ENCODE measurements at regions of chrX and their contacts with region 1.

Region 1: DNA sequence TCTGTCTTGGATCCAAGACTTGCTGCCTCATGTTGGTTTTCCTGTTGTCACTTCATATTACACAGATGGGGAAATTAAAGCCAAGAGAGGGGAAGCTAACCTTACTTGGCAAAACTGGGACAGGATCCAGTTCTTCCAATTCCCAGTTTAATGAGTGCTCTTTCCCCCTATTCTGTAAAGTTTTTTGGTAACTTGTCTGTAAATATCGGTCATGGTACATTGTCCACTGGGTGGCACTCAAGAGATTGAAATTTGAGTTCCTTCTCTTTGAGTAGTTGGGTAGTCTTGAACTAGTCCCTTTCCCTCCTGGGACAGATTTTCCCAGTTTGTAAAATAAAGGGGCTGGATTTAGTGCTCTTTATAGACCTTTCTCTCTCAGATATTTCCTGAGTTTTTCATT is 12.4 kb upstream of the EOLA2 start:
- DNase-seq: peak in 1 of 2 donors; percentile 21
- ATAC-seq: peak in 4 of 8 donors; percentile 29 to 59 (median 39)
- H3K4me3 ChIP-seq: no peak overlapping the region
- H3K27ac ChIP-seq: no peak overlapping the region
- H3K4me1 ChIP-seq: peaks cover 0 to 3% (median 0%) of the 10 kb centered on the region in 9 donors
- H3K27me3 ChIP-seq: no peaks in the 10 kb centered on the region
- CTCF ChIP-seq: peak in 7 of 9 donors; percentile 28 to 57 (median 47)

Region 2: DNA sequence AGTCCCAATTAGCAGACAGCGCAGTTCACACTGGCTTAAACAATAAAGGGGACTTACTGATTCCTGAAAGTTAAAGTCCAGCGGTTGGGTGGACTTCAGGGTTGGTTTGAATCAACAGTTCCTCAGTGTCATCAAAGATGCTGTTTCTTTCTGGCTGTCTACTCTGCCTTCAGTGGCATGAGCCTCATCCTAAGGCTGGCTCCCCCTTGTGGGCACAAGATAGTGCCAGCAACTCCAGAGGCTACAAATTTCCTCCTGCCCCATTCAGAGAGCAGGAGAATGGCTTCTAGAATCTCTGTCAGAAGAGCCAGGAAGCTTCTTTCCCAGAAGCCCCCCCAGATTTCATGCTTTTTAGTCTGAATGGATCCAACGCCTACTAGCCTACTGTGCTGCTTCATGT is 535.3 kb after region 1 on chrX:
- intact Hi-C with region 1: loop called in 3 of 10 experiments (anchors 5 to 10 kb)
- DNase-seq: peak; percentile 25 to 37
- ATAC-seq: peak in 7 of 8 donors; percentile 37 to 73 (median 63)
- H3K4me3 ChIP-seq: no peak overlapping the region
- H3K27ac ChIP-seq: no peak overlapping the region
- H3K4me1 ChIP-seq: no peaks in the 10 kb centered on the region
- H3K27me3 ChIP-seq: peaks cover 0 to 3% (median 0%) of the 10 kb centered on the region in 7 donors
- CTCF ChIP-seq: peak; percentile 25 to 68 (median 62)

Region 3: GRCh38 chrX:150683536-150684146 is 733.0 kb after region 1 on chrX:
- intact Hi-C with region 1: loop called in 2 of 10 experiments (anchors 10 kb)
- DNase-seq: no peak
- ATAC-seq: no peak
- H3K4me3 ChIP-seq: no peak overlapping the region
- H3K27ac ChIP-seq: no peak overlapping the region
- H3K4me1 ChIP-seq: no peaks in the 10 kb centered on the region
- H3K27me3 ChIP-seq: peaks cover 0 to 9% (median 0%) of the 10 kb centered on the region in 7 donors
- CTCF ChIP-seq: peak in 7 of 9 donors; percentile 44 to 62 (median 51)

Region 4: DNA sequence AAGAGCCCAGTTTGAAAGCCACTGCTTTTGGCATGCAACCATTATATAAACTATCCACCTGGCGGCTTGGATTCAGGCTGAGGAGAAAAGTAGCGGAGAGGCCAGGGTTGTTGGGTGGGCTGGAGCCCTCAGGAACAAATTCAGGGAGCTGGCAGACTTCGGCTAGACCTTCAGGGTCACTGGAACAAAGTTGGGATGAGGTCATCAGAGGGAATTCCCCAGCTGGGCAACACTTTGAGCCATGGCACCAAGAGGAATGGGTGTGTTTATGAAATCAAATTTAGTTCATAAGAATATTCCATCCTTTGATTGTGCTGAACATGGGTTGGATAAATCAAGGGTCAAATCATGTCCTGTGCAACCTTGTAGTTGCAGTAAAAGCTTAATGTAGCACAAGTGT is 764.5 kb after region 1 on chrX:
- intact Hi-C with region 1: loop called in 2 of 10 experiments (anchors 5 to 10 kb)
- DNase-seq: no peak
- ATAC-seq: no peak
- H3K4me3 ChIP-seq: no peak overlapping the region
- H3K27ac ChIP-seq: no peak overlapping the region
- H3K4me1 ChIP-seq: peaks cover 0 to 4% (median 0%) of the 10 kb centered on the region in 9 donors
- H3K27me3 ChIP-seq: peaks cover 0 to 7% (median 0%) of the 10 kb centered on the region in 7 donors
- CTCF ChIP-seq: no peak